AG04449 (cell line): ENCODE measurements at regions of chr1 and their contacts with region 1.

Region 1: GRCh38 chr1:186680245-186681061 is at the start of gene PTGS2:
- DNase-seq: peak; percentile 85
- H3K4me3 ChIP-seq: peak within 1 kb of the TSS; percentile 80
- CTCF ChIP-seq: peak; percentile 86

Region 2: DNA sequence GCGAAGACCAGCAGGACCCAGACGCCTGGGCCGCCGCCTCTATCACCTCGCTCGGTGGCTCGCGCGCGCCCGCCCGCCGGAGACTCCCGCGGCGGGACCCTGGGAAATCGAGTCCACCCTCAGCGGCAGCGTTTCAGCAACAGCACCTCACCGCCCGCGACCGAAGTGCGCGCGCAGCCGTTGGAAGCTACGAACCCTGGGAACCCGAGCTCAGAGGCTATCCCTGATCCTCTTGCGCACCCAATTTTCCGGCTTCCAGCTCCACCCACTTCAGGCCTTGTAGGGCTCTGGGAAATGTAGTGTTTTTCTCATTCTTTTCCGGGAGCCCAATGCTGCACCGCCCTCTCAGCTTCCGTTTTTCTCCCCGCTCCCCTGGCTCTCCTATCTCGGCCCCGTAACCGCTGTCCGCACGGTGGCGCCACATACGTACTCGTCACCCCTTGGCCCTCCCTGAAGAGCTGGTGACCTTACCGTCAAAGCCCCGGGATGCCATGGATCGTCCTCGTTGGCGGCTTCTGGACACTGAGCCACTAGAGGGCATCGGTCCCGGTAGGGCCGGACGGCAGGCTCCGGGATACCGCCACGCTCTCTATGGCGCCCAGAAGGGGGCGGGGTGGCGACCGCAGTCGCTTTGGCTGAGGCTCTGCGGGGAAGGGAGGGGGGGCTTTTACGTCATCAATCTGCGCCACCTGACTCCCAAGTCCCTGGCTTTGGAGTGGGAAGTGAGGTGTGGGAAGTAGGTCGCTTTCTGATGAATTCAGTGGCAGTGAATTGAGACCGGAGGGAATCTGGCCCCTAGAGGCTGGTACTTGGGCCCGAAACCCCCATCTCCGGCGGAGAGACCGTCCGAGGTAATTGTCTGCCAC is 305.1 kb before region 1 on chr1 and contains the starts of genes ODR4 and TPR:
- CTCF ChIA-PET with region 1: interaction called, 22 read pairs
- POLR2A ChIA-PET with region 1: interaction called, 6 read pairs
- DNase-seq: peak; percentile 98
- H3K4me3 ChIP-seq: peak within 1 kb of the TSS; percentile 84
- CTCF ChIP-seq: peak; percentile 86

Region 3: DNA sequence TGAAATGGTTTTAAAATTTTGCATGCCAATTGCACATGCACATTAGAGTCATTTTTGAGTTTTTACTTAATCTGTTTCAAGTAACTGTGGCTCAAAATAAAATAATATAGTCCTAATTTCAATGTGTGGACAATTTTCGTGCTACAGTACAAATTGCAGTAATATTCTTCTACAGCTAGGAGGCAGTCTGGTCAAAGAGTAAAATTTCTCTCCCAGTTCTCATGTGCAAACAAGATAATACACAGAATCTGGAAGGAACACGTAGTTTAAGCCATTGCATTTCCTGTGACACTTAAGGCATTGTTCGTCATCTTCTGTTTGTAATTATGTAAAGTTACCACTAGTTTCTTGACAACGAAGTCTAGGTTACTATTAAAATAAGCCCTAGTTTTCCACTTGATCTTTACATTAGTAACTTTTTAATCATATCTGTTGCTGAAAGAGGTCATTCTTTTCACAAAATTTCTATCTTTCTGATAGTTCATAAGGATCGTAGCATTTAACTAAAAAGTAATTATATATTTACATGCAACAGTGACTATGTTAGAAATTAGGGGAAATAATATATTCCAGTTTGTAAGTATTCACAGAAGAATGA is 275.9 kb before region 1 on chr1:
- CTCF ChIA-PET with region 1: interaction called, 15 read pairs
- POLR2A ChIA-PET with region 1: no interaction called
- DNase-seq: peak; percentile 17
- H3K4me3 ChIP-seq: no peak overlapping the region
- CTCF ChIP-seq: peak; percentile 60

Region 4: DNA sequence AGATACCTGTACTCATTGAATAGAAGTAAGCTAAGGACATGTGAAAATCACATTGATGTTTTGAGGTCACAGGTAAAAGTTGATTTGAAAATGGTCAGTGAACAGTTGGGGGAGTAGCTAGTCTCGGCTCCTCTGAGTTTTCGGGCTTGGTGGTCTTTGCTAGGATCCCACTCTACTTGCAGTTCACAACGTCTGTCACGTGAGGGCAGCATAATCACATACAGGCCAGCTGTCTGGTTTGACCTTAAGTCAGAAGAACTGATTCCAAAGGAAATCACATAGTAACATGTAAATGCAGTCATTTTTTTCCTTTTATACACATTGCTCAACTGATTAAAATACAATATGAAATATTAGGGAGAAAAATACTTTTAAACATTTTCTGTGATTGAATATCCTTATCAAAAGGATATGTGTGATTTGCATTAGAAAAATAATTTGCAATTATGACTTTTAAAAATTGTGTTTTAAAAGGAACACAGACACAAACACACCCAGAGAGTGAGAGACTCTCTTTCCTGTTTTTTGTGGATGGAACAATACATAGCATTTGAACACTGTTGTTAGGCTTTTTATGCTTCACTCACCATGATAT is 197.7 kb before region 1 on chr1:
- CTCF ChIA-PET with region 1: interaction called, 82 read pairs
- POLR2A ChIA-PET with region 1: interaction called, 4 read pairs
- DNase-seq: no peak
- H3K4me3 ChIP-seq: no peak overlapping the region
- CTCF ChIP-seq: peak; percentile 87

Region 5: GRCh38 chr1:186574951-186575747 is 105.3 kb before region 1 on chr1:
- CTCF ChIA-PET with region 1: no interaction called
- POLR2A ChIA-PET with region 1: no interaction called
- DNase-seq: no peak
- H3K4me3 ChIP-seq: no peak overlapping the region
- CTCF ChIP-seq: no peak

Region 6: DNA sequence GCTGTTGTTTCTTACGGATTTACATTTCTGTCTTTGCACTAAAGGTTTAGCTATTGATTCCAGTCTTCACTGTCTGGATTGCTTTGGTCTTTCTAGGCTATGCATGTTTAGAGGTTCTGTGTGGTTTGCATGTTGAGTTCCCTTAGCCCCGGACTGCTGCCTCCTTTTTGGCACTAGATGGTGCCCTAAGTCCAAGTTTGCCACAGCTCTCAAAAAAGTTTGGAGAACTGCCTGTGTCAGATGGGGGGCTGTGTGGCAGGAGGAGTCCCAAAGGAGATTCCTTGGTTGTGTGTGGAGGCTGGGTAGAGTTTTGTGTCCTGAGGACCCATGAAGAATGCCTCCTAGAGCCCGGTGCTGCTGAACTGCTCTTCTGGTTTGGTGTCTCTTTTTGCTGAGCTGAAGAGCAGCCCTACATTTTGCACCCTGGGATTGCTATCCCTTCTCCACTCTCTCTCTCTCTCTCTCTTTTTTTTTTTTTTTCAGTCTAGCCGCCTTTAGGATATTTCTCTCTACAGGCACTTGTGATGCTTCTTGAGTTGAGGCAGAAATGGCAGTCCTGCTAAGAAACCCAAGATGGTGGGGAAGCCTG is 74.6 kb before region 1 on chr1:
- CTCF ChIA-PET with region 1: interaction called, 21 read pairs
- POLR2A ChIA-PET with region 1: no interaction called
- DNase-seq: no peak
- H3K4me3 ChIP-seq: no peak overlapping the region
- CTCF ChIP-seq: peak; percentile 80

Region 7: GRCh38 chr1:186662740-186663139 is 17.7 kb before region 1 on chr1:
- CTCF ChIA-PET with region 1: interaction called, 16 read pairs
- POLR2A ChIA-PET with region 1: interaction called, 3 read pairs
- DNase-seq: peak; percentile 36
- H3K4me3 ChIP-seq: no peak overlapping the region
- CTCF ChIP-seq: no peak

Region 8: GRCh38 chr1:186722711-186723309 is 42.4 kb after region 1 on chr1:
- CTCF ChIA-PET with region 1: no interaction called
- POLR2A ChIA-PET with region 1: no interaction called
- DNase-seq: no peak
- H3K4me3 ChIP-seq: no peak overlapping the region
- CTCF ChIP-seq: peak; percentile 29